A549 (cell line): ENCODE measurements at regions of chr2 and their contacts with region 1.

Region 1: DNA sequence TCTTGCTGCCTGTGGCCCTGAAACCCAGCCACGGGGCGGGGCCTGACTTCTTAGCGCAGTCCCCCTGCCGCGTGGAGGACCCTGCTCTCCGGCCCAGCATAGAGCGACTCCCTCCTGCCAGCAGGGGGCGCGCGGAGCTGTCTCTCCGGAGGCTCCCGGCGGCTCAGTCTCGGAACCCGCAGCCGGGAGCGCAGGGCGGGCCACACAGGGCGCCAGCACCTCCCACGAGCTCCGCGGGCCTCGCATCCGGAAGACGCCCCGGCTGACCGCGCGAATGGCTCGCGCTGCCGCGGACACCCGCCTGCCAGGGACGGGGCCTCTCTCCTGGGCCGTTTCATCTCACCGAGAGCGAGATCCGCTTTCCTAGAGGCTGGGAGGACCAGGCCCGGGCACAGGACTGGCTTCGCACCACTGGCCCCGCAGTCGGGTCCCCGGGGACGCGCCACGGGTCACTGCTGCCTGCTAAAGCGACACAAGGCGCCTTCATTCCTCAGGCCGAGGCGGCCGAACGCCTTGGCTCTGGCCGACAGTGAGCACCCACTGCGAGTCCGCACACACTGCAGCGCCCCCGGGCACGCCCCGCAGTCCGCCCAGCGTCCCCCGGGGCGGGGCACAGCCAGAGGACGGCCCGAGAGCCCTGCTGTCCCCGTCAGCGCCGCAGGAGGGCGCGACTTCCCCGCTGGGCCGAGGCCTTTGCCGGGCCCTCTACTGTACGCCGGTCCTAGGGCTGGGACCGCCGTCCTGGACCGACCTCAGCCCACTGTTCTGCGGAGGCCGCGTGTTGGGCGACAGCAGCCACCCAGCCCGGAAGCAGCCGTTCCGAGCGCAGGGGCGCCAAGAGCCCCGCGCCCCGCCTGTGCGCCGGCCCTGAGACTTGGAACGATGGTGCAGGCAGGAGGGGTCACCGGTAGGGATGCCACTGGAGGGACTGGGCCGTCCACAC is 39.0 kb upstream of the ARHGEF4 start:
- DNase-seq: peak; percentile 81 to 83
- ATAC-seq: peak; percentile 92 to 97
- H3K4me3 ChIP-seq: peak overlapping the region; percentile 66
- H3K27ac ChIP-seq: peak overlapping the region; percentile 84 to 95
- H3K4me1 ChIP-seq: peaks cover 4% of the 10 kb centered on the region; the same call in 1 of the 3 replicates
- CTCF ChIP-seq: peak; percentile 87
- EP300 ChIP-seq: no peak
- POLR2A ChIP-seq: peak; percentile 82
- RAD21 ChIP-seq: peak; percentile 84 to 93

Region 2: DNA sequence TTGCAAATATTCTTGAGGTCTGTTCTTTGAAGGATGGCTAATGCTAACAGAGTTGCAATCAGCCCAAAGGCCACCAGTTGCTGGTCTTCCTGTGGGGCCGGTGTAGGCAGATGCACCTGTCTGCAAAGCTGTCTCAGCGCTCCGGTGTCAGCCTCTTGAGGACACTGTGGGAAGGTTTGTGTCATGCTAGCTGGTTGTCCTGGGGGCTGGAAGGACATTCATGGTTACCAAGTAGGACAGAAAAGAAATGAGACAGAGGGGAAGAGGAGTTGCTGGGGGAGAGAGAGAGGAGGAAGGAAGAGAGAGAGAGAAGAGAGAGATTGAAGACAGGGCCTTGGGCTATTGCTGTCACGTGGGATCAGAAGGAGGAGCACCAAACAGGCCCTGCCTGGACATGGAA is 1839.5 kb before region 1 on chr2:
- CTCF ChIA-PET with region 1: no interaction called
- POLR2A ChIA-PET with region 1: no interaction called
- DNase-seq: no peak
- ATAC-seq: no peak
- H3K4me3 ChIP-seq: no peak overlapping the region
- H3K27ac ChIP-seq: no peak overlapping the region
- H3K4me1 ChIP-seq: no peaks in the 10 kb centered on the region
- CTCF ChIP-seq: no peak
- EP300 ChIP-seq: no peak
- POLR2A ChIP-seq: no peak
- RAD21 ChIP-seq: no peak

Region 3: DNA sequence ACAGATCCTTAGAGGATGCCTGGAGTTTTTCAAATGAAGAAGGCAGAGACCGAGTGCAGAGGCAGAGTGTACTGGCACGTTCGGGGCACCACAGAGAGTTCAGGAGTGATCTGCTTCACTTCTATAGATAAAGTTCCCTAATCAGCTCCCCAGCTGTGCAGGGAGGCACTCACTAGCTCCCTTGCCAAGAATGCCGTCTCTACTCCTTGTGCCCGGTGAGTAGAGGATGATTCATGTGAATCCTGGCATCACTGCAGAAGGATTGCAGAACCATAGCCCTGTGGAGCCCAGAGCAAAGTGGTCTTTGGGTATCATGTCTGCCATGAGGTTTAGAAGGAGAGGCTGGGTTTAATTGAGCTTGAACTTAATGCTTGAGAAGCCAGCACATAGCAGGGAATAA is 1328.4 kb before region 1 on chr2:
- CTCF ChIA-PET with region 1: no interaction called
- POLR2A ChIA-PET with region 1: no interaction called
- DNase-seq: no peak
- ATAC-seq: no peak
- H3K4me3 ChIP-seq: no peak overlapping the region
- H3K27ac ChIP-seq: no peak overlapping the region
- H3K4me1 ChIP-seq: no peaks in the 10 kb centered on the region
- CTCF ChIP-seq: no peak
- EP300 ChIP-seq: no peak
- POLR2A ChIP-seq: no peak
- RAD21 ChIP-seq: no peak

Region 4: GRCh38 chr2:130755256-130756052 is 42.3 kb before region 1 on chr2 and contains the start of gene AMER3:
- CTCF ChIA-PET with region 1: no interaction called
- POLR2A ChIA-PET with region 1: no interaction called
- DNase-seq: no peak
- ATAC-seq: peak; percentile 7 to 51; a peak in 4 of 6 replicates
- H3K4me3 ChIP-seq: peak within 1 kb of the TSS; percentile 41
- H3K27ac ChIP-seq: no peak within 1 kb of the TSS
- H3K4me1 ChIP-seq: no peaks in the 10 kb centered on the region
- CTCF ChIP-seq: no peak
- EP300 ChIP-seq: no peak
- POLR2A ChIP-seq: no peak
- RAD21 ChIP-seq: no peak
- polyA plus RNA-seq, gene AMER3: not detected in 2 replicates

Region 5: DNA sequence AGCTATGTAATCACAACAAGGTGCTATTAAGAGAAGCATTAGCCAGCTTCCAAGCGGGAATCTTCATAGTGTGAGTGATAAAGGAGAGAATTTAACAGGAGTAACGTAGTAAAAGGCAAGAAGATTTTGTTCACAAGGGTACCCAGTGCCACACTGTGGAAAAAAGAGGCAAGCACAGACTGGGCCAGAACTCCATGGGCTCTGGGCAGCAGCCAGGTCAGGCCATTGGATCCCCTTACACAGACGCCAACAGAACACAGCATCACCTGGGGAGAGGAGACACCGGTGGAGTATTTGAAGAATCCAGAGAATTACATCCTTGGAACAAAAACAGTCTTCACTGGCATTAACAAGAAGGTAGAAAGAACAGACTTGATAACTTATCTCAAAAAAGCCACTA is 21.2 kb before region 1 on chr2:
- CTCF ChIA-PET with region 1: interaction called, 14 read pairs
- POLR2A ChIA-PET with region 1: no interaction called
- DNase-seq: no peak
- ATAC-seq: peak; percentile 69 to 71; a peak in 5 of 6 replicates
- H3K4me3 ChIP-seq: no peak overlapping the region
- H3K27ac ChIP-seq: no peak overlapping the region
- H3K4me1 ChIP-seq: no peaks in the 10 kb centered on the region
- CTCF ChIP-seq: no peak
- EP300 ChIP-seq: no peak
- POLR2A ChIP-seq: no peak
- RAD21 ChIP-seq: no peak; a peak in 1 of 5 replicates

Region 6: GRCh38 chr2:130814931-130815680 is 17.3 kb after region 1 on chr2:
- CTCF ChIA-PET with region 1: interaction called, 63 read pairs
- POLR2A ChIA-PET with region 1: no interaction called
- DNase-seq: no peak
- ATAC-seq: no peak
- H3K4me3 ChIP-seq: no peak overlapping the region
- H3K27ac ChIP-seq: no peak overlapping the region
- H3K4me1 ChIP-seq: no peaks in the 10 kb centered on the region
- CTCF ChIP-seq: no peak
- EP300 ChIP-seq: no peak
- POLR2A ChIP-seq: no peak
- RAD21 ChIP-seq: no peak

Region 7: DNA sequence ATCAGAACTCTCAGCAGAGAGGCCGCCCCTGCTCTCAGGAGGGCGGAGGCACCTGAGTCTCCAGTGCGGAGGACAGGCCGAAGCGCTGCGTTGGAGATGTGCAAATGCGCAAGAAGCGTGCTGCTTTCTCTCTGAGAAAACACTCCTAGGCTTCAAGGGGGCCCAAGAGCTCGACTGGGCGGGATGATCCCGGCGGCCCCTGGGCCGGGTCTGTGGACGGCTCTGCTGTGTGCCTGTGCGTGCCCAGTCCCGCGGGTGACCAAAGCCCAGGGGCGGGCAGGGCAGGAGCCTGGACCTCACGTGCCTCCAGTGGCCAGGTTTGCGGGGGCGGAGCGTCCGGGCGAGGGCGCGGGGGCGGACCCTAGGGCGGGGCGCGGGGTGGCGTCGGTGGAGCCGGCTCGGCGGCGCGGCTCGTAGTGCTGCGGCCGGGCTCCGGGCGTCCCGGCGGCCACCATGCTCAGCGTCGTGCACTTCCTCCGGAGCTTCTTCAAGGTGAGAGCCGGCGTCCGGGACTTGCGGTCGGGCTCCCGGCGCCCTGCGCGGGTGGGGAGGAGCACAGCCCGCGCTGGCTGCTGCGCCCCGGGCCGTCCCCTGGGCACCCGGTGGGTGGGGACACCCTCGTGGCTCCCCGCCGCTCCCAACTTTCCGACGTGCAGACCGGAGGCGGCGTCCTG is 38.9 kb after region 1 on chr2 and contains the start of gene ARHGEF4:
- CTCF ChIA-PET with region 1: interaction called, 14 read pairs
- POLR2A ChIA-PET with region 1: no interaction called
- DNase-seq: peak; percentile 49 to 61
- ATAC-seq: peak; percentile 76 to 88
- H3K4me3 ChIP-seq: peak within 1 kb of the TSS; percentile 61
- H3K27ac ChIP-seq: peak within 1 kb of the TSS; percentile 67 to 85; a peak in 5 of 6 replicates
- H3K4me1 ChIP-seq: peaks cover 7% of the 10 kb centered on the region; the same call in 1 of the 3 replicates
- CTCF ChIP-seq: no peak
- EP300 ChIP-seq: no peak
- POLR2A ChIP-seq: peak; percentile 34; the same call in 1 of the 2 replicates
- RAD21 ChIP-seq: no peak
- polyA plus RNA-seq, gene ARHGEF4: 1.00 and 1.5 TPM in 2 replicates

Region 8: GRCh38 chr2:130884503-130884902 is 86.7 kb after region 1 on chr2:
- CTCF ChIA-PET with region 1: interaction called, 56 read pairs
- POLR2A ChIA-PET with region 1: no interaction called
- DNase-seq: no peak
- ATAC-seq: peak in 1 of 2 experiments; percentile 27; a peak in 2 of 6 replicates
- H3K4me3 ChIP-seq: no peak overlapping the region
- H3K27ac ChIP-seq: no peak overlapping the region
- H3K4me1 ChIP-seq: no peaks in the 10 kb centered on the region
- CTCF ChIP-seq: no peak
- EP300 ChIP-seq: no peak
- POLR2A ChIP-seq: no peak
- RAD21 ChIP-seq: peak in 1 of 2 experiments; percentile 12; a peak in 1 of 5 replicates

Region 9: GRCh38 chr2:130920415-130921163 is 122.8 kb after region 1 on chr2:
- CTCF ChIA-PET with region 1: interaction called, 72 read pairs
- POLR2A ChIA-PET with region 1: no interaction called
- DNase-seq: peak; percentile 71 to 75
- ATAC-seq: peak; percentile 76 to 91
- H3K4me3 ChIP-seq: no peak overlapping the region
- H3K27ac ChIP-seq: no peak overlapping the region
- H3K4me1 ChIP-seq: no peaks in the 10 kb centered on the region
- CTCF ChIP-seq: peak; percentile 86
- EP300 ChIP-seq: no peak
- POLR2A ChIP-seq: no peak
- RAD21 ChIP-seq: peak; percentile 67 to 70